Activated CD4-positive, alpha-beta T cell treated with anti-CD3 and anti-CD28 coated beads for 36 hours (primary cell): ENCODE measurements at regions of chr2 and their contacts with region 1.

Region 1: DNA sequence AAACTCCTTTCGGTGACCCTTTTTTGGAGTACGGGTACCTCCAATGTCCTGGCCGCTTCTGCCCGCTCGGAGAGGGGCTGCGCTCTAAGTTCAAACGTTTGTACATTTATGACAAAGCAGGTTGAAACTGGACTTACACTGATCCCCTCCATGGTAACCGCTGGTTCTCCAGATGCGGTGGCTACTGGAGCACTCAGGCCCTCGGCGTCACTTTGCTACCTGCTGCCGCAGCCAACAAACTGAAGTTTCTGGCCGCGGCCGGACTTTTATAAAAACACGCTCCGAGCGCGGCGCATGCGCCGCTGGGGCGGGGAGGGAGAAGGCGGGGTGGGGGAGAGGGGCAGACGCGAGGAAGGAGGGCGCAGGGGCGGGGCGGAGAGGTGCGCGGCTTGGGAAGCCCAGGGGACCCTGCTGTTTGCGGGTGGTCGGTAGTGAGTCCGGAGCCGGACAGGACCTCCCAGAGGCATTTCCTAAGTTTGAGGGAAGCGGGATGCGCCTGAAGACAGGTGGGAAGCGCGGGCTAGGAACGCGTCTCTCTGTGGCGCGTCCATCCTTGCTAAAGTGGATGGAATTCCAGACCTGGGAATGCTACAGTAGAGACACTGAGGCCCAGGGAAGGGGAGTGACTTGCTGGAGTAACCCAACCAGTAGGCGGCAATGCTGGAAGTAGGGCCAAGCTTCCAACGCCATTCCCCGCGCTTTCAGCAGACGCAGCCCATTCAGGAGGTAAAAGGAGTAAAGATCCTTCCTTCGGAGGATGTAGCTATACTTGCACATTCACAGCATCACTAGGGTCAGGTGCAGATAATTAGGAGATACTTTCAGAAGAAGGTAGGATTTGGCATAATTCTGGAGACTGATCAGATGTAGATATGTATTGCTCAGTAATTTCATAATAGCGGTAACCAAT is at the start of gene CXCR4:
- DNase-seq: peak; percentile 90
- ATAC-seq: peak; percentile 34
- H3K4me3 Mint-ChIP-seq: peak within 1 kb of the TSS; percentile 94
- H3K27ac Mint-ChIP-seq: peak within 1 kb of the TSS; percentile 93
- H3K4me1 Mint-ChIP-seq: peaks cover 60% of the 10 kb centered on the region
- H3K27me3 Mint-ChIP-seq: peaks cover 2% of the 10 kb centered on the region
- total RNA-seq, gene CXCR4: 75.4 to 89.3 TPM

Region 2: DNA sequence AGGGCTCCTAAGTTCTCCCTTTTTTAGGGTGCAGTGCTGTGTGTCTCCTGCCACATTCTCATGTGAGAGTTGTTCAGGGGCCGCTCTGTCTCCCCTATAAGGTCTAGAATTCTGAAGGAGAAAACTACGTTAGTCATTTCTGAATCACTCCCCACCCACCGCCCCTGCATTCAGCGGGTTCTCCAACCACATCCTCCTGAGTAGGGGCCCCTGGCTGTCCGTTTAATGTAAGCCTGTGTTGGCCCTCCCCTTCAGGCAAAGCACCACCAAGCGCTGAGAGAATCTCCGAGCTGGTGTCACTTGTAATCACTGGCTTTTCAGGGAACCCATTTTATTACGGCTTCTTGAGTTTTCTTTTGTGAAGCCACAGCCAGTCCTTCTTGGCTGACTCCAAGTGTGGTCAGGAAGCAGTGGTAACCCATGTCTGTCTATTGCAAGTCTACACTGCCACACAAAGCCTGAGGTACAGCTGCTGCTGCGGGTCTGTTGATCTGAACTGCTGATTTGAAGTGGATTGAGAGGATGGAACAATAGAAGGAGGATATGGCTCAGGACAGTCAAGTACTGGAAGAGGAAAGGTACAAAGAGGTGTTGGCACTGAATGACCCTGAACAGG is 298.1 kb before region 1 on chr2:
- CTCF ChIA-PET with region 1: no interaction called
- POLR2A ChIA-PET with region 1: no interaction called
- intact Hi-C with region 1: loop called in 1 of 2 experiments (anchors 5 kb)
- DNase-seq: peak; percentile 94
- ATAC-seq: peak; percentile 93
- H3K4me3 Mint-ChIP-seq: peak overlapping the region; percentile 71
- H3K27ac Mint-ChIP-seq: peak overlapping the region; percentile 87
- H3K4me1 Mint-ChIP-seq: peaks cover 45% of the 10 kb centered on the region
- H3K27me3 Mint-ChIP-seq: no peaks in the 10 kb centered on the region

Region 3: GRCh38 chr2:135963841-135964240 is 154.3 kb before region 1 on chr2:
- CTCF ChIA-PET with region 1: no interaction called
- POLR2A ChIA-PET with region 1: no interaction called
- intact Hi-C with region 1: no loop called
- DNase-seq: no peak
- ATAC-seq: no peak
- H3K4me3 Mint-ChIP-seq: no peak overlapping the region
- H3K27ac Mint-ChIP-seq: no peak overlapping the region
- H3K4me1 Mint-ChIP-seq: peaks cover 56% of the 10 kb centered on the region
- H3K27me3 Mint-ChIP-seq: no peaks in the 10 kb centered on the region

Region 4: DNA sequence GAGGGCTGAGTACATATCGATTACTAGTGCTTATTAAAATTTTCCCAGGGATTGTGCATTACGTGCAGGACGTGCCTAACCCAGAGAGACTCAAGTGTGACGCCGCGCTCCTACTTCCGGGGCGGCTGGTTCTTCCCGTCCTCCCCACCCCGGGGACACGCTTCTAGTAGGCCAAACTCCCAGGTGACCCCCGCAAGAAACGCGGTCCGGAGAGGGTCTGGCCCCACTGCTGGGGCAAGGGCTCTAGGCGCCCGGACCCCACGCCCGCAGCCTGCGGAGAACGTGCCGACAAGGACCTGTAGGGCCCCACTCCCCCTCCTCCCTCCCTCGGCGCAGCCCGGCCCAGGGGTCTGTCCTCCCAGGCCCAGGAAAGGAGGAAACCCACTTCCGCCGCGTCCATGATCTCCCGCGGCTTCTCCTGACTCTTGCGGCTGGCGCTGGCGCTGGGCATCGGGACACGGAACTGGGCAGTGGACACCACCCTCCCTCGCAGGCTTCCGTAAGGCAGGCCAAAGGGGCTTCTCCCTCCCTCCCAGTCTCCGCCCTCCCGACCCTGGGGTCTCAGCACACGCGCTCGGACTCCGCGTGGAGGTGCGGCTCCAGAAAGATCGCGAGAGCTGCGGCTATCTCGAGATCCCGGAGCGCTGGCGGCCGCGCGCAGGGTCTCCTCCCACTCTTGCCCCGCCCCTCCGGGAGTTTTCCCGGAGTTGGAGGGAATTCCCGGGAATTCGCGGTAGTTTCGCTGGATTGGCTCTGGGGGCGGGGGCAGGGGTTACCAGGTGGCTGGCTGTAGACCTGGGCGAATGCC is 132.9 kb before region 1 on chr2 and contains the start of gene DARS1:
- CTCF ChIA-PET with region 1: interaction called, 3 read pairs
- POLR2A ChIA-PET with region 1: no interaction called
- intact Hi-C with region 1: loop called (anchors 1 to 2 kb)
- DNase-seq: peak; percentile 92
- ATAC-seq: peak; percentile 82
- H3K4me3 Mint-ChIP-seq: peak within 1 kb of the TSS; percentile 93
- H3K27ac Mint-ChIP-seq: peak within 1 kb of the TSS; percentile 97
- H3K4me1 Mint-ChIP-seq: peaks cover 44% of the 10 kb centered on the region
- H3K27me3 Mint-ChIP-seq: no peaks in the 10 kb centered on the region
- total RNA-seq, gene DARS1: 174 to 190 TPM

Region 5: DNA sequence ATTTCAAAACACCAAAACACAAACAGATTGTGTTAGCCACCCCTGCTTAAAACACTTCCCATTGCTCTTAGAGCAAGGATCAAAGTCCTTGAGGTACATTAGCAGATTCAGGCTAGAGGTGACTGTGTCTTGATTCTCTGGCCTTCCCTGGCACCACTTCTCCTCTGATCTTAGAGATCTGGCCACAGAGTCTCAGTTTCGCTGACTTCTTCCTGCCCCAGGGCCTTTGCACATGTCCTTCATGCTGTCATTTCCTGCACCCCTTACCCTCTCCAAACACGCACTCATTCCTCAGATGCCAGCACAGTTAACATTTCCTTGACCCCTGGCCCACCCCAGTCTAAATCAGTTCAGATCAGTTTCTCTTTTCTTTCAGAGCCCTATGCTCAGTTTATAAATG is 17.1 kb before region 1 on chr2:
- CTCF ChIA-PET with region 1: no interaction called
- POLR2A ChIA-PET with region 1: no interaction called
- intact Hi-C with region 1: no loop called
- DNase-seq: peak; percentile 22
- ATAC-seq: no peak
- H3K4me3 Mint-ChIP-seq: no peak overlapping the region
- H3K27ac Mint-ChIP-seq: no peak overlapping the region
- H3K4me1 Mint-ChIP-seq: peaks cover 4% of the 10 kb centered on the region
- H3K27me3 Mint-ChIP-seq: no peaks in the 10 kb centered on the region

Region 6: GRCh38 chr2:136129601-136130000 is 11.4 kb after region 1 on chr2:
- CTCF ChIA-PET with region 1: interaction called, 4 read pairs
- POLR2A ChIA-PET with region 1: interaction called, 6 read pairs
- intact Hi-C with region 1: loop called (anchors 1 kb)
- DNase-seq: no peak
- ATAC-seq: peak; percentile 23
- H3K4me3 Mint-ChIP-seq: peak overlapping the region; percentile 31
- H3K27ac Mint-ChIP-seq: peak overlapping the region; percentile 88
- H3K4me1 Mint-ChIP-seq: peaks cover 95% of the 10 kb centered on the region
- H3K27me3 Mint-ChIP-seq: peaks cover 7% of the 10 kb centered on the region

Region 7: GRCh38 chr2:136305517-136306192 is 187.5 kb after region 1 on chr2:
- CTCF ChIA-PET with region 1: no interaction called
- POLR2A ChIA-PET with region 1: no interaction called
- intact Hi-C with region 1: loop called in 1 of 2 experiments (anchors 5 kb)
- DNase-seq: peak; percentile 84
- ATAC-seq: peak; percentile 99
- H3K4me3 Mint-ChIP-seq: no peak overlapping the region
- H3K27ac Mint-ChIP-seq: peak overlapping the region; percentile 88
- H3K4me1 Mint-ChIP-seq: peaks cover 33% of the 10 kb centered on the region
- H3K27me3 Mint-ChIP-seq: peaks cover 5% of the 10 kb centered on the region

Region 8: GRCh38 chr2:136378712-136379595 is 260.8 kb after region 1 on chr2:
- CTCF ChIA-PET with region 1: interaction called, 6 read pairs
- POLR2A ChIA-PET with region 1: interaction called, 14 read pairs
- intact Hi-C with region 1: loop called (anchors 1 kb)
- DNase-seq: peak; percentile 87
- ATAC-seq: peak; percentile 11
- H3K4me3 Mint-ChIP-seq: no peak overlapping the region
- H3K27ac Mint-ChIP-seq: no peak overlapping the region
- H3K4me1 Mint-ChIP-seq: peaks cover 82% of the 10 kb centered on the region
- H3K27me3 Mint-ChIP-seq: no peaks in the 10 kb centered on the region